ENCODE measurements at regions of chr16 and their contacts with region 1.

Region 1: DNA sequence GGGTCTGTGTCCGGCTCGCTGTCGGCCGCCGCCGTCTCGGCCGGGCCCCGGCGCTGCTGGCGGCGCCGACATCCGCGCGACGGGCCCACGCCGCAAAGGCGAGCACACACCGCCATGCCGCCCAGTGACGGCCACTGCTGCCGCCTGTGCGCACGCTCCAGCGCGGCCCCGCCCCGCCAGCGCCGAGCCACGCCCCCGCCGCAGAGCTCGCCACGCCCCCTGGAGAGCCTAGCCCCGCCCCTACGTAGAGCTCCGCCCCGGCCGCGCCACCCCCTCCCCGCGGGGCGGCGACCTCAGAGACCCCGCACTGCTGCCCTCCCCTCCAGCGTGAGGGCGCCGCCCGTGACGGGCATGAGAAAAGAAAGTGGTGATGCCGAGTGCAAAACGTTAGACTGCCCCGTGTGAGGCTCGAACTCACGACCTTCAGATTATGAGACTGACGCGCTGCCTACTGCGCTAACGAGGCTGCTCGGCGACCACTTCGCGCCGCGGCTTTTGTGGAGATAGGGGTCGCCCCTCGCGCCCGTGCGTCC is at the start of gene FBXO31:
- DNase-seq: peak; percentile 89 to 95
- H3K4me3 ChIP-seq: peak within 1 kb of the TSS; percentile 63 to 97 (median 77)
- H3K27ac ChIP-seq: peak within 1 kb of the TSS; percentile 84 to 96 (median 94)
- H3K4me1 ChIP-seq: peaks cover 47 to 75% (median 64%) of the 10 kb centered on the region in 4 donors
- H3K27me3 ChIP-seq: no peaks in the 10 kb centered on the region
- CTCF ChIP-seq: no peak
- EP300 ChIP-seq: no peak
- POLR2A ChIP-seq: no peak
- total RNA-seq, gene FBXO31: 20.9 to 1,171 (median 41.5) TPM

Region 2: GRCh38 chr16:87324411-87325275 is 59.1 kb before region 1 on chr16:
- intact Hi-C with region 1: loop called (anchors 5 kb)
- DNase-seq: peak in 1 of 2 donors; percentile 70
- H3K4me3 ChIP-seq: no peak overlapping the region
- H3K27ac ChIP-seq: peak overlapping the region in 1 of 5 donors; percentile 3
- H3K4me1 ChIP-seq: peaks cover 0 to 22% (median 14%) of the 10 kb centered on the region in 4 donors
- H3K27me3 ChIP-seq: no peaks in the 10 kb centered on the region
- CTCF ChIP-seq: peak in 5 of 7 experiments; percentile 51 to 85 (median 75)
- EP300 ChIP-seq: no peak
- POLR2A ChIP-seq: no peak